ENCODE measurements at regions of chr14 and their contacts with region 1.

Region 1: DNA sequence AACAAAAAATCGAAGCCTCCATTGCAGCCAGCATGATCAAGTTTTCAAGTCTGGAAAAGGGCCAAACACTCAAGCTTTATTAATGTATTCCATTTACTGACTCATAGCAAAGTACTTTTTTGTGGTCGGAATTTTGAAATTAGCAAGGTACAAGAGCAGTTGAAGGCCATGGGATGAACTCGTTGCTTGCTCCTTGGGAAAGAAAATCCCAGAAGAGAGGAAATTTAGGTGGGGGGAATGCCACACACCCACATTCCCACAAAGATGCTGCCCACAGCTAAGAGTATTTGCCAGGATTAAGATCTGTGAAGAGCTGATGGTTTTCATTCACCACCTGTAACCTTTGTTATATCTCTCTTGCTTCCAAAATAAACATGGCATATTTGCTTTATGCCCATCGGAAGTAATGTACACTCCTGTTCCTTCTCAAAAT is 333.7 kb downstream of the EGLN3 start:
- DNase-seq: peak; percentile 89
- H3K4me3 ChIP-seq: no peak overlapping the region
- CTCF ChIP-seq: no peak

Region 2: DNA sequence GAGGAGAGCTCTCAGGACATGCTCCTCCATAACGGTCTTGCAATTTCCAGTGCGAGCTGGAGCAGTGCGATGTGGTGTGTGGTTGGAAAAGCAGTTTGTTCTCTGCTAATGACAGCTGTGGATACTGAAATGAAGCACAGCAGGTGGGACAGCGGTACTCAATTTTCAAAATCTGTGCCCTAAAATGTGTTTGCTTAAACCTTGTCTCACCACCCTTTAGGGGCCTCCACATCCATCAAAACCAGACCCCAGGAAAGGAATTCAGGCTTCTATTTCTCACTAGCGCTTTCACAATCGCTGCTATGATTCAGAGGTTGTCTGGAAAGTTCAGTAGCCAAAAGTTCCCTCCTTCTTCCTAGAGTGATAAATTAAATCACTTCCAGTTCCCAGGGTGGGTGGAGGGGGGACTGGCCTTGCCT is 107.1 kb before region 1 on chr14:
- in situ Hi-C with region 1: loop called (anchors 5 kb)
- DNase-seq: peak; percentile 82
- H3K4me3 ChIP-seq: no peak overlapping the region
- CTCF ChIP-seq: no peak